ENCODE measurements at regions of chrX and their contacts with region 1.

Region 1: GRCh38 chrX:11770320-11770719 is 12.3 kb downstream of the MSL3 start:
- DNase-seq: peak in 4 of 10 donors; percentile 31 to 45 (median 39)
- H3K4me3 ChIP-seq: no peak overlapping the region
- H3K27ac ChIP-seq: no peak overlapping the region
- H3K27me3 ChIP-seq: peaks cover 0 to 63% (median under 1%) of the 10 kb centered on the region in 45 donors
- CTCF ChIP-seq: peak; percentile 39 to 92 (median 81)

Region 2: DNA sequence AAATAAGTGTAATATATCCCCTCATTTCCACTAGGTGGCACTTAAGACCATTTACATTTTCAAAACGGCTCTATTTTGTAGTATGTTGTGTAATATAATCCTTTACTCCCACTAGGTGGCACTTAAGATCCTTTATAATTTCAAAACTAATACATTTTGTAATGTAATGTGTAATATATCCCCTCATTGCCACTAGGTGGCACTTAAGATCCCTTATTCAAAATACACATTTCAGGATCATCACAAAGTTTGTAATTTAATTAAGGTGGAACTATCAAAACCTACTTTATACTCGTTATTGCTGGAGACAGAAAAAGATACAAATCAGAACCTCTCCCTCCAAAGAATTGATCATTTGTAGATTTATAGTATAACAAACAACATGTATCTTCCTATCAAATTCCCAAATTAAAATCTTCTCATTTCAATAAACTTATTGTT is 237.1 kb before region 1 on chrX:
- intact Hi-C with region 1: loop called in 1 of 2 experiments (anchors 2 kb)
- DNase-seq: no peak
- H3K4me3 ChIP-seq: no peak overlapping the region
- H3K27ac ChIP-seq: no peak overlapping the region
- H3K27me3 ChIP-seq: peaks cover 0 to 47% (median 12%) of the 10 kb centered on the region in 45 donors
- CTCF ChIP-seq: peak; percentile 78 to 100 (median 96)

Region 3: DNA sequence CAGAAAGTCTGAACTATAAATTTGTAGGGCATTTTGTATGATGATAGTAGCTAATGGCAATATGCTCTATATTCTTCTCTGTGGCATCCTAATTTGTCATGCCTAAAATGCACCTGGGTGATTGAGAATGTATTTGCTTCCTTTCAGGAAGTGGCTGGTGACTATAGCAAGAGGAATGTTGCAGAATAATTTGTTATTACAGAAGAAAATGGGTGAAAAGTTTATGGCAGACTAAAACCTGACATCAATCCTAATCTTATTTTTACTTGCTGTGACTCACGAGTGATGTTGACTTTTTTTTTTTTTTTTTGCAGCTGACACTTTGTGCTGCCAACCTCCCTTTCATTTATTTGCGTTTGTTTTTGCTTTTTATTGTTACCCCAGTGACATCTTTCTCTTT is 128.8 kb after region 1 on chrX:
- intact Hi-C with region 1: no loop called
- DNase-seq: no peak
- H3K4me3 ChIP-seq: no peak overlapping the region
- H3K27ac ChIP-seq: no peak overlapping the region
- H3K27me3 ChIP-seq: peaks cover 0 to 69% (median 16%) of the 10 kb centered on the region in 45 donors
- CTCF ChIP-seq: no peak

Measured in dorsolateral prefrontal cortex (tissue), 120 donors.